AG04450 (cell line): ENCODE measurements at regions of chr20 and their contacts with region 1.

Region 1: GRCh38 chr20:13819885-13820645 is 35.2 kb downstream of the NDUFAF5 start:
- DNase-seq: no peak
- H3K4me3 ChIP-seq: no peak overlapping the region
- H3K27ac ChIP-seq: no peak overlapping the region
- H3K27me3 ChIP-seq: no peaks in the 10 kb centered on the region
- CTCF ChIP-seq: peak; percentile 70

Region 2: DNA sequence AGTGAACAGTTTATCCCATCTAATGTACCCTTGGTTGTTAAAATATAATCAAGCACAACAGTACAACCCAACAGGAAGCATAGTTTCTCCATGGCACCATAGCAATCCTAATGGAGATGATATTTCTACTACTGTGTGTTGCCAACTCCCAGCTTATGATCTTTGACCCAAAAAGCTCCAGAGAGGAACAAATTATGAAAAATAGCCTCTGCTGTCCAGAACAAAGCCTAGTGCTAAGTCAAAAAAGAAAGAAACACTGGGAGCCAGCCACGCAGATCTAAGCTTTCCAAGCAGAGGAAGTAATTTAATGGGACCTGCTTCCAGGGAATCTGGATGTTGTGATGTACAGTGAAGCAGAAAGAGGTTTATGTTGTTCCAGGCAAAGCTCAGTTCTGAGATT is 129.1 kb before region 1 on chr20:
- CTCF ChIA-PET with region 1: no interaction called
- POLR2A ChIA-PET with region 1: no interaction called
- DNase-seq: no peak
- H3K4me3 ChIP-seq: no peak overlapping the region
- H3K27ac ChIP-seq: no peak overlapping the region
- H3K27me3 ChIP-seq: no peaks in the 10 kb centered on the region
- CTCF ChIP-seq: no peak

Region 3: GRCh38 chr20:13800728-13801134 is 19.3 kb before region 1 on chr20:
- CTCF ChIA-PET with region 1: interaction called, 43 read pairs
- POLR2A ChIA-PET with region 1: no interaction called
- DNase-seq: peak; percentile 78
- H3K4me3 ChIP-seq: no peak overlapping the region
- H3K27ac ChIP-seq: no peak overlapping the region
- H3K27me3 ChIP-seq: no peaks in the 10 kb centered on the region
- CTCF ChIP-seq: no peak

Region 4: GRCh38 chr20:13809373-13809772 is 10.7 kb before region 1 on chr20:
- CTCF ChIA-PET with region 1: interaction called, 43 read pairs
- POLR2A ChIA-PET with region 1: no interaction called
- DNase-seq: no peak
- H3K4me3 ChIP-seq: no peak overlapping the region
- H3K27ac ChIP-seq: no peak overlapping the region
- H3K27me3 ChIP-seq: no peaks in the 10 kb centered on the region
- CTCF ChIP-seq: no peak

Region 5: GRCh38 chr20:13831476-13831875 is 11.4 kb after region 1 on chr20:
- CTCF ChIA-PET with region 1: interaction called, 14 read pairs
- POLR2A ChIA-PET with region 1: no interaction called
- DNase-seq: no peak
- H3K4me3 ChIP-seq: no peak overlapping the region
- H3K27ac ChIP-seq: no peak overlapping the region
- H3K27me3 ChIP-seq: peaks cover 2% of the 10 kb centered on the region
- CTCF ChIP-seq: no peak

Region 6: DNA sequence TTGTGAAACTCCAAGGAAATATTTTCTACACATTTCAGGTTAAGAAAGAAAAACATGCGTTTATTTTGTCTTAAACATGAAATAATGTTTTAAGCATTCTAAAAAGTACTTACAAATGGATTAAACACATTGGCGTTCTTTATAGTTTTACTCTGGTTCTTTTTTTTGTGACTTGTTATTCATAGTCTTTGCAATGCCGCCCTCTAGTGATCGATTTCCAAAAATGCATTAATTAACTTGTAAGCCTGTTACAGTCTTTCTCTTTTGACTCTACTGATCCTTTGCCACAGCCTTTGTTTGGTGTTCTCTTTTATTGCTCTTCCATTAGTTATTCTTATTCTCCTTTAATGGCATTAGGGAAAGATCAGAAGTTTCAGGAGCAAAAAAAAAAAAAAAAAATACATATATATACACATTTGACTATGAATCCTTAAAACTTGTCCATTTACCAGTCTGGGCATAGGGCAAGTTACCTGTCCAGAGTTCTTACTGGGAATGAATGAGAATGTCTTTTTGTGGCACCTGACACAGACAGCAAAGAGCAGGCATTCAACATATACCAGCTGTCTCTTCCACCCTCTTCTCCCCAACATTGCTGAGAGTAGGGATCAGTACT is 235.2 kb after region 1 on chr20:
- CTCF ChIA-PET with region 1: interaction called, 59 read pairs
- POLR2A ChIA-PET with region 1: no interaction called
- DNase-seq: peak; percentile 20
- H3K4me3 ChIP-seq: no peak overlapping the region
- H3K27ac ChIP-seq: no peak overlapping the region
- H3K27me3 ChIP-seq: no peaks in the 10 kb centered on the region
- CTCF ChIP-seq: peak; percentile 64

Region 7: DNA sequence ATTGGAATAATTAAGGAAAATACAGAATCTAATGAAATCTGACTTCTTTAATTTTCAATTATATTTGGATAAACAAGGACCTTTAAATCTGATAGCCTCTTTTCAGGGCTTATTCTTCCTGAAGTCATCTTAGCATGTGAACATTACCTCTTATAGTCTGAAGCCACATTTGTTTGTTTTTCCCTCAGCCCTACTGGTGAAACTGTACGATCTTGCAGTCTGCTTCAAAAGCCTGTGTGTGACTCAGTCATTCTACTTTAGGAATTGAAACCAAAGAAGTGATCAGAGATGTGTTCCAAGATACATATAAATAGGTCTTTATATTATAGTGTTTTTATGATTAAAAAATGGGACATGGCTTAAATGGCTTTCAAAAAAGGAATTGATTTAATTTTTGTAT is 242.7 kb after region 1 on chr20:
- CTCF ChIA-PET with region 1: interaction called, 12 read pairs
- POLR2A ChIA-PET with region 1: no interaction called
- DNase-seq: no peak
- H3K4me3 ChIP-seq: no peak overlapping the region
- H3K27ac ChIP-seq: no peak overlapping the region
- H3K27me3 ChIP-seq: no peaks in the 10 kb centered on the region
- CTCF ChIP-seq: no peak